GM12878 (cell line): ENCODE measurements at regions of chrX and their contacts with region 1.

Region 1: DNA sequence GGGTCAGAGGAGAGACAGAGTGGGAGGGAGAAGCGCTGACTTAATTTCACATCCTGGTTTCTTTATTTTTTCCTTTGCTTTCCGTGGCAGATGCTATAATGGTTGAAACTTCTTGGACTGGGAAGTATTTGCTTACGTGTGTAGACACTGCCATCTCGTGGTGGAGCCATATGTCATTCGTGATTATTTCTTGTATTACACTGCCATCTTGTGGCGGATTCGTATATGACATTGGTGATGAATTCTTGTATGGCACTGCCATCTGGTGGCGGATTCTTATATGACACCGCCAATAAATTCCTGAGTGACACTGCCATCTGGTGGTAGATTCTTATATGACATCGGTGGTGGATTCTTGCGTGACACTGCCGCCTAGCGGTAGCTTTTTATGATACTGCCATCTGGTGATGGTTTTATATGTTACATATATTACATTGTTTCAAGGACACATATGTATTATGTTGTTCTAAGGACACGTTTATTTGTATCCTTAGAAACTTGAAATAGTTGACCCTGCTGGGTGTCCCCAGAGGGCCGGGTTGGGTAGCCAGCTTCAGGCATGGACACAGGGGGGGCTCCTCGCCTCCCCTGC is 37.3 kb upstream of the CLCN4 start:
- DNase-seq: peak; percentile 73
- ATAC-seq: peak; percentile 60
- H3K4me3 ChIP-seq: no peak overlapping the region
- H3K27ac ChIP-seq: no peak overlapping the region
- H3K4me1 ChIP-seq: peaks cover 31% of the 10 kb centered on the region
- H3K27me3 ChIP-seq: no peaks in the 10 kb centered on the region
- CTCF ChIP-seq: peak; percentile 98 to 100 (median 100)
- EP300 ChIP-seq: no peak
- POLR2A ChIP-seq: no peak
- RAD21 ChIP-seq: peak; percentile 89

Region 2: DNA sequence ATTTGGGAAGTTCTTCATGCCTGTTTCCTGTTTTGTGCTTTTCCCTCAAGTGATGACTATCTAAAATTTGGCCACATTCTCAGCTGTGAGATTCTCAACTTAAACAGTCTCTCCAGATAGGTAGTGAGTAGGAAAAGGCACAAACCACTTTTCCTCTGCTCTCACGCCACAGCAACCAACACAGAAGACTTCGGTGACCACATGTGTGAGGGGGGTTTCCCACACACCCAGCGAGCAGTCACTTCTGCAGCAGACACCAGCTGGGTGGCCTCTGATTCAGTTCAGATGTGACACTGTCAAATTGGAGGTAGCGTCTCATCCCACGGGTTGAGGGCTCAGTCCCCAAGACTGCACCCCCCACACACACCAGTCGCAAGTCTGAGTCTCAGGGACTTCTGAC is 177.4 kb before region 1 on chrX:
- CTCF ChIA-PET with region 1: interaction called, 3 read pairs
- POLR2A ChIA-PET with region 1: no interaction called
- RAD21 ChIA-PET with region 1: interaction called, 3 read pairs
- SMC1A ChIA-PET with region 1: no interaction called
- in situ Hi-C with region 1: no loop called
- intact Hi-C with region 1: loop called (anchors 2 kb)
- DNase-seq: peak; percentile 69
- ATAC-seq: peak; percentile 84
- H3K4me3 ChIP-seq: no peak overlapping the region
- H3K27ac ChIP-seq: peak overlapping the region; percentile 29; the same call in 1 of the 2 replicates
- H3K4me1 ChIP-seq: peaks cover 3% of the 10 kb centered on the region; the same call in 1 of the 2 replicates
- H3K27me3 ChIP-seq: no peaks in the 10 kb centered on the region
- CTCF ChIP-seq: no peak
- EP300 ChIP-seq: peak; percentile 76 to 84; a peak in 3 of 4 replicates
- POLR2A ChIP-seq: no peak
- RAD21 ChIP-seq: no peak

Region 3: DNA sequence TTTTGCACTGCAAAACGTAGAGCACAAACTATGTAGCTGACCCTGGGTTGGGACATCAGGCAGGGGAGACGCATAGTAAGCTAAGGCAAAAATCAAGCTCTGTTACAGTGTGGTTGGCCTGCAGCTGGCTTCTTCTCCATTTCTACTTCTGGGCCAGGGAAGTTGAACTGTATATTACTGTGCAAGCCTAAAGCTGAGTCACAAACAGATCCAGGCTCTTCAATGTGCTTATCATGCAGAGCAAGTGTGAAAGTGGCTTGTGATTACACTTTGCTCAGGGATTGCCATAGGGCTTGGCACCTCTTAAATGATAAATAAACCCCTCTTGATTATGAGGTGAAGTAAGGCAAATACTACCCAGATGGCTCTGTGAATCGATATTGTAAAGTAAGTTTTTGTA is 111.9 kb before region 1 on chrX:
- CTCF ChIA-PET with region 1: interaction called, 57 read pairs
- POLR2A ChIA-PET with region 1: interaction called, 5 read pairs
- RAD21 ChIA-PET with region 1: interaction called, 424 read pairs
- SMC1A ChIA-PET with region 1: interaction called, 281 read pairs
- in situ Hi-C with region 1: no loop called
- intact Hi-C with region 1: no loop called
- DNase-seq: no peak
- ATAC-seq: peak; percentile 1; the same call in 2 of the 3 replicates
- H3K4me3 ChIP-seq: no peak overlapping the region
- H3K27ac ChIP-seq: no peak overlapping the region
- H3K4me1 ChIP-seq: peaks cover 9% of the 10 kb centered on the region
- H3K27me3 ChIP-seq: no peaks in the 10 kb centered on the region
- CTCF ChIP-seq: no peak
- EP300 ChIP-seq: no peak
- POLR2A ChIP-seq: no peak
- RAD21 ChIP-seq: no peak

Region 4: DNA sequence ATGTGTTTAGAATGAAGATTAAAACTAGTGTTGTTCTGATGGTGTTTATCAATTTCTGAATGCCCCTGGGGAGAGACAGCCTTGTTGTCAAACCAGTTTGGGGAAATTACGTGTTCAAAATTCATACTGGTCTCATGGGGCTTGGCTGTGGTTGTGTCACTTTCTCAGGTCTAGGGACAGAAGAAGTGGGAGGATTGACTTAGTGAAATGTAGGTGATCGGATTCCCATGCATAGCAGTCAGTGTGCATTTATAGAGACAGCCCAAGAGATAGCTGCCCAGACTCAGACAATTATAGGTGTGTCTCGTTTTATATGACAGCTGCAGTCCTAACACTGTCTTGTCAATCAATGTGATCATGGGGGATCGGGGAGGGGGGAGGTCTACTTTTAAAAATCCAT is 57.1 kb before region 1 on chrX:
- CTCF ChIA-PET with region 1: interaction called, 13 read pairs
- POLR2A ChIA-PET with region 1: interaction called, 3 read pairs
- RAD21 ChIA-PET with region 1: interaction called, 6 read pairs
- SMC1A ChIA-PET with region 1: interaction called, 6 read pairs
- in situ Hi-C with region 1: no loop called
- intact Hi-C with region 1: loop called (anchors 10 kb)
- DNase-seq: peak; percentile 45
- ATAC-seq: peak; percentile 89
- H3K4me3 ChIP-seq: no peak overlapping the region
- H3K27ac ChIP-seq: no peak overlapping the region
- H3K4me1 ChIP-seq: peaks cover 5% of the 10 kb centered on the region; the same call in 1 of the 2 replicates
- H3K27me3 ChIP-seq: no peaks in the 10 kb centered on the region
- CTCF ChIP-seq: no peak
- EP300 ChIP-seq: peak in 1 of 2 experiments; percentile 53; a peak in 2 of 4 replicates
- POLR2A ChIP-seq: no peak
- RAD21 ChIP-seq: no peak

Region 5: GRCh38 chrX:10098270-10098713 is 21.2 kb before region 1 on chrX:
- CTCF ChIA-PET with region 1: interaction called, 55 read pairs
- POLR2A ChIA-PET with region 1: interaction called, 3 read pairs
- RAD21 ChIA-PET with region 1: interaction called, 68 read pairs
- SMC1A ChIA-PET with region 1: interaction called, 110 read pairs
- in situ Hi-C with region 1: no loop called
- intact Hi-C with region 1: loop called (anchors 2 kb)
- DNase-seq: peak; percentile 51
- ATAC-seq: peak; percentile 87
- H3K4me3 ChIP-seq: peak overlapping the region; percentile 50
- H3K27ac ChIP-seq: peak overlapping the region; percentile 77
- H3K4me1 ChIP-seq: peaks cover 11% of the 10 kb centered on the region
- H3K27me3 ChIP-seq: no peaks in the 10 kb centered on the region; a peak in 1 of 4 replicates
- CTCF ChIP-seq: no peak
- EP300 ChIP-seq: peak in 1 of 2 experiments; percentile 63; a peak in 1 of 4 replicates
- POLR2A ChIP-seq: no peak
- RAD21 ChIP-seq: 0 out of 2 replicates have a peak, but pooled peaks have one; percentile 19

Region 6: GRCh38 chrX:10697616-10698317 is 578.3 kb after region 1 on chrX:
- CTCF ChIA-PET with region 1: no interaction called
- POLR2A ChIA-PET with region 1: no interaction called
- RAD21 ChIA-PET with region 1: no interaction called
- SMC1A ChIA-PET with region 1: no interaction called
- in situ Hi-C with region 1: no loop called
- intact Hi-C with region 1: no loop called
- DNase-seq: no peak
- ATAC-seq: no peak
- H3K4me3 ChIP-seq: no peak overlapping the region
- H3K27ac ChIP-seq: no peak overlapping the region
- H3K4me1 ChIP-seq: no peaks in the 10 kb centered on the region
- H3K27me3 ChIP-seq: no peaks in the 10 kb centered on the region
- CTCF ChIP-seq: no peak
- EP300 ChIP-seq: no peak
- POLR2A ChIP-seq: no peak
- RAD21 ChIP-seq: no peak